BJ (cell line): ENCODE measurements at regions of chr1 and their contacts with region 1.

Region 1: DNA sequence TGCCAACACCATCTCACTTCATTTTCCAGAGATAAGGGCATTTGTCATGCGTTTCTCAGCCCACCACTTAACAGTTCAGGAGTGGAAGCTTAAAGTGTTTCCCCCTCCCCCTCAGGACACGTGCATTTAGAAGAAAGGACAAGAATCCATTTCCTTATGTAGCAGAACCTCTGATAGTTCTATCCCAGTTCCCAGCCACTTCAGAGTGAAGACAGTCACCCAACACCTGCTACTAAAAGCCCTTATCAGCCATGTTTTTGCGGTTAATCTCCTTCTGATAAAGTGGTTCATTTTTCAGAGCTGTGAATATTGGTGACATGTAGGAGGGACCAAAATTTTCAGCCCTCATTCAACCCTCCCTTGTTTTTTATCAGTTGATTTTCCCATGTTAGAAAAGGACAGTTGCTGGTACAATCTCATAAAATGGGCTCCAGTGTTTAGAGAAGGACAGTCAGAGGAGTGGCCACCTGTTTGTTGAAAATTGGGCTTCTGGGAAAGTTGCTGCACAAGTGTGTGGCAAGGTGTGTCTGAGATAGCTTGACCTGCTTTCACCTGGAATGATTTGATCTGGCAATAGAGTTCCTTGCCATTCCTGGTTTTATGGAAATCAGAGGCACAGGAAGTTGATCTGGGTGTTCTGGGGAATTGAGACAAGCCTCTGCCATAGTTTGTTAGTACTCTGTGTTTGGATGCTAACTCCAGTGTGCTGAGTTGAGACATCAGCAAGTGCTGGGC is 114.0 kb downstream of the PPP1R12B start:
- DNase-seq: no peak
- H3K4me3 ChIP-seq: no peak overlapping the region
- H3K27me3 ChIP-seq: no peaks in the 10 kb centered on the region
- CTCF ChIP-seq: no peak

Region 2: GRCh38 chr1:200693327-200693726 is 1769.2 kb before region 1 on chr1:
- CTCF ChIA-PET with region 1: no interaction called
- POLR2A ChIA-PET with region 1: no interaction called
- DNase-seq: no peak
- H3K4me3 ChIP-seq: no peak overlapping the region
- H3K27me3 ChIP-seq: no peaks in the 10 kb centered on the region
- CTCF ChIP-seq: no peak

Region 3: DNA sequence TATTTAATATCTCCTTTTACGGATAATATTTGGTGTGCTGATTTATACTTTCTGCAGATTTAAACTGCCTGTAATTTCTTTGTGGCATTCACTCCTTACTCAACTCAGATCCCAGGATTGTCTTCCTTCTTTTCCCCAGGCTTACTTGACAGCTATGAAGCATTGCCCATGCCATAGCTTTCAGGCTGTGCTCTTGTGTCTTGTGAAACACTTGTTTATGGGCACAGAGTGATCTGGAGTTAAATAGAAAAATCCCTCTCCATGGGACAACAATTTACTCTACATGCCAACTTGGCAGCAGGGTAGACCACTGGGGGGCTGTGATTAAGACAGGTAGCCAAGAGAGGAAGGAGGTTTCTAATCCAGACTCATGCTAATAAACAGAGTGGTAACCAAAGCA is 56.6 kb before region 1 on chr1:
- CTCF ChIA-PET with region 1: no interaction called
- POLR2A ChIA-PET with region 1: no interaction called
- DNase-seq: no peak
- H3K4me3 ChIP-seq: no peak overlapping the region
- H3K27me3 ChIP-seq: no peaks in the 10 kb centered on the region
- CTCF ChIP-seq: no peak

Region 4: DNA sequence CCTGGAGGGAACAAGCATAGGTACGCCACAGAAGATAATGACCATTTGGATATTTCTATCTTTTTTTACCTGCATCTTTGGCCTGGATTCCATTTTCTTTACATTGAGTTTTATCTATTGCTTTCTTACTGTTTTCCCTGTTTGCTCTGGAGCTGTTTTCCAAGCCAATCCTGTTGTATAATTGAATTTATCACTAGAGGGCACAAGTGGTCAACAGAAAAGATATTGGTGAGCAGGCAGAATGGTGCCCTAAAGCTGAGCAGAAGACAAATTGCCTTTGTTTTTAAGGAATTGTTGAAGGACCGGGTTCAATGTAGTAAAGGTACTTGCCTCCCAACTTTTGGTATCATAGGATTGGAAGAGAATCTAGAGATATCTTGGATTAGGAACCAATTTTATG is 38.8 kb after region 1 on chr1:
- CTCF ChIA-PET with region 1: no interaction called
- POLR2A ChIA-PET with region 1: interaction called, 12 read pairs
- DNase-seq: no peak
- H3K4me3 ChIP-seq: no peak overlapping the region
- H3K27me3 ChIP-seq: no peaks in the 10 kb centered on the region
- CTCF ChIP-seq: peak; percentile 39

Region 5: DNA sequence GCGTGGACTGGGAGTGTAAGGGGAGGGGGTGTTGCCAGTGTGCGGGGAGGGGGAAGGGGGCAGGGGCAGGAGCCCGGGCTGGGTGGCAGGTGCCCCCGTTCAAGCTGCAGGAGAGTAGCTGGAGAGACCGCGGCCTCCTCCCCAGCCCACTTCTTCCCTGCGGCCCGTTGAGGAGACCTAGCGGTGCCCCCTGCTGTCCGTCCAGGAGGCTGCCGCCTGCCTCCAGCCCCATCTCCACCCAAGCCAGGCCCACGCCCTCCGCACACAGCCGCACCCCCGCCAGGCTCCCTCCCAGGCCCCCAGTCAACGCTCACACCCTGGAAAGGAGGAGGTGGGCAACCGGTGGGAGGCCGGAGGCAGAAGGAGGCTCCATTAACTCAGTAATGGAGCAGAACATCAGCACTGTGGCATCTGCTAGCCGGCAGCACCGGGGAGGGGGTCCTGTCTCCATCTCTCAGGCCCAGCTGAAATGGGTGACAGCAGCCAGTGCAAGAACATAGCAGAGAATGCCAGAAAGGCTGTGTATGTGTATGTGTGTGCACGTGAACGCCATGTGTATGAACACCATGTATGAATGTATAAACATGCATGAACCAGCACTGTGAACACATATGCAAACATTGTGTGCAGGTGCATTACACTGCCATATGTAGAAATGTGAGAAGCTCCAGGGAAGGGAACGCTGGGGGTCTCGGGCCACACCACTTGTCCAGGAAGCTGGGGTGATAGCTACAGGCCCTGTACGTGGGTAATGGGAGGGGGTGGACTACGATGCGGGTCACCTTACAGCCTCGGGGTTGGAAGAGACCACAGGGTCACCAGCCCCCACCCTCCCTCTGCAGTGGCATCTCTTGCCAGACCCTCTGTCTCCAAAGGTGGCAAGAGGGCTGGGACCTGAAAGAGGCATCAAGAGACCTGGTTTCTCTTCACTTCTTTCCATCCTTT is 163.2 kb after region 1 on chr1:
- CTCF ChIA-PET with region 1: interaction called, 14 read pairs
- POLR2A ChIA-PET with region 1: no interaction called
- DNase-seq: no peak
- H3K4me3 ChIP-seq: no peak overlapping the region
- H3K27me3 ChIP-seq: no peaks in the 10 kb centered on the region; the same call in none of the 2 replicates
- CTCF ChIP-seq: peak; percentile 81